ENCODE measurements at regions of chr2 and their contacts with region 1.

Region 1: GRCh38 chr2:98835831-98836385 is 100.1 kb downstream of the CRACDL start:
- DNase-seq: no peak
- H3K4me3 ChIP-seq: no peak overlapping the region
- H3K27ac ChIP-seq: no peak overlapping the region
- H3K4me1 ChIP-seq: peaks cover 23% of the 10 kb centered on the region
- H3K27me3 ChIP-seq: no peaks in the 10 kb centered on the region
- CTCF ChIP-seq: no peak
- POLR2A ChIP-seq: no peak

Region 2: GRCh38 chr2:98568881-98569793 is 266.8 kb before region 1 on chr2:
- CTCF ChIA-PET with region 1: interaction called, 17 read pairs
- POLR2A ChIA-PET with region 1: no interaction called
- dilution Hi-C with region 1: no loop called
- intact Hi-C with region 1: loop called (anchors 1 kb)
- DNase-seq: peak; percentile 30
- H3K4me3 ChIP-seq: no peak overlapping the region
- H3K27ac ChIP-seq: no peak overlapping the region
- H3K4me1 ChIP-seq: no peaks in the 10 kb centered on the region
- H3K27me3 ChIP-seq: no peaks in the 10 kb centered on the region
- CTCF ChIP-seq: peak; percentile 95
- POLR2A ChIP-seq: no peak

Region 3: GRCh38 chr2:98702127-98702802 is 133.6 kb before region 1 on chr2:
- CTCF ChIA-PET with region 1: interaction called, 3 read pairs
- POLR2A ChIA-PET with region 1: no interaction called
- dilution Hi-C with region 1: no loop called
- intact Hi-C with region 1: loop called (anchors 2 kb)
- DNase-seq: peak; percentile 43
- H3K4me3 ChIP-seq: no peak overlapping the region
- H3K27ac ChIP-seq: peak overlapping the region; percentile 50
- H3K4me1 ChIP-seq: peaks cover 36% of the 10 kb centered on the region
- H3K27me3 ChIP-seq: no peaks in the 10 kb centered on the region
- CTCF ChIP-seq: no peak
- POLR2A ChIP-seq: no peak

Region 4: DNA sequence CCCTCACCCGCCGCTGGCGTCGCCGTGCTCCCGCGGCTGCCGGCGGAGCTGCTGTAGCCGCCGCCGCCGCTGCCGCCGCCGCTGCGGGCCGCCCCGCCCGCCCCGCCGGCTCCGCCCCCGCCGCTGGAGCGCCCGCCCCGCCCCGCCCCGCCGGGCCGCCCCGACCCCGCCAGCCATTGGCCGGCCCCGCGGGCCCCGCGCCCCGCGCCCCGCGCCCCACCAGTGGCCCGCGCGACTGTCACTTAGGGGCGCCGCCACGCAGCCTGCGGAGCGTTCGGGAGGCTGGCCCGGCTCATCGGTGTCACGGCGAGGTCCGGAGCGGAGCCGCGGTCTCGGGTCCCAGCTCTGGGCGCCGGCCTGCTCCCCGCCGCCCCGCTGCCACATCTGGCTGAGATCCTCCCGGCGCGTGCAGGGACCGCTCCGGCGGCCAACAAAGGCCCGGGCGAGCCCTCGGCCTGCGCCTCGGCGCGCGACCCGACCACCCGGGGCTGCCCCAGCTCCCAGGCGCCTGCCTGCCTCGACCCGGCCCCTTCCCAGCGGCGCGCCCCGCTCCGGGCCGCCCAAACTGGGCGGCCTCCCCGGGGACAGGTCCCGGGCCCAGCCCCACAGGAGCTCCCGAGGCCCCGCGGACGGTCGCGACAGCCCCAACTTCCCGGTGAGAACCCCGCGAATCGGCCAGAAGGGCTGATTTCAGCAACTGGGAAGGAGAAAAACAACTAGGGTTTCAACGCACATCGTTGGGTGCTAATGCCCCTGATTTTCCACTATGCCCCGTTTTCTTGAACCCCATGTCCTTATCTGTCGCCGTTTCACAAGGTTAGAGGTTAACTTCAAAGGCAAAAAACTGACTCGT is 104.6 kb before region 1 on chr2 and contains the start of gene MGAT4A:
- CTCF ChIA-PET with region 1: interaction called, 21 read pairs
- POLR2A ChIA-PET with region 1: no interaction called
- dilution Hi-C with region 1: no loop called
- intact Hi-C with region 1: loop called (anchors 1 kb)
- DNase-seq: peak; percentile 52
- H3K4me3 ChIP-seq: peak within 1 kb of the TSS; percentile 64 to 97 (median 77)
- H3K27ac ChIP-seq: peak within 1 kb of the TSS; percentile 60
- H3K4me1 ChIP-seq: peaks cover 48% of the 10 kb centered on the region
- H3K27me3 ChIP-seq: no peaks in the 10 kb centered on the region
- CTCF ChIP-seq: no peak
- POLR2A ChIP-seq: peak; percentile 68
- total RNA-seq, gene MGAT4A: 42.2 and 47.6 TPM in 2 replicates

Region 5: DNA sequence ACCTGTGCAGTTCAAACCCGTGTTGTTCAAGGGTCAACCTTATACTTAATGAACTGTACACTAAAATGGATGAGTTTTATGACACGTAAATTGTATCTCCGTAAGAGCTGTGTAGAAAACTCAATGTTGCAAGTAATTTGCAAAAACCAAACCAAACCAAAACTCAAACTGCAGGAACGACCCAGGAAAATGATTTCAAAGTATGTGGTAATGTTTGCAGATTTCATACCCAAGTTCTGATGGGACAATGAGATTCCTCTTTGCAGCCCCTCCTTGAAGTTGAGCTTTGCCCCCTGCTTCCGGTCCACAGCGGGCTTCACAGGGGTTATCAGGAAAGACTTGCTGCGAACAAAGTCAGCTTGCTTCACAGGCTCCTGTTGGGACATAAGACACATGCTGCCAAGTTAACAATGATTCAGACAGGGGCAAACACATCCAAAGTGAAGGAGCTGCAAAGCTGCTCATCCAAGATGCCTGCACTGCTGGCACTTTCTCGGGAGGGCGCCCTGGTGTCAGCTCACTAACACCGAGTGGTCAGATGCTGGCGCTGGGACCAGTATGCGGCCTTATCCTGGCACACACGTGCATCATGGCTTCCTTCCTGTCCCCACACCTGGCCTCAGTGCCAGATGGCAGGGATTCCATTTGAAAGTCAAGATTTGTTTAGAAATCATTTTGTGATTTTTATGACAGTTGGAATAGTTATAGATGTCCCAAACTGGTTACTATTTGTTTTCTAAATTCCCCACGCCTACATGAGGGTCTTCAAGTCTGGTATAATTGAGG is 39.8 kb before region 1 on chr2:
- CTCF ChIA-PET with region 1: interaction called, 3 read pairs
- POLR2A ChIA-PET with region 1: no interaction called
- dilution Hi-C with region 1: no loop called
- intact Hi-C with region 1: loop called (anchors 1 kb)
- DNase-seq: peak; percentile 49
- H3K4me3 ChIP-seq: no peak overlapping the region
- H3K27ac ChIP-seq: no peak overlapping the region
- H3K4me1 ChIP-seq: peaks cover 43% of the 10 kb centered on the region
- H3K27me3 ChIP-seq: no peaks in the 10 kb centered on the region
- CTCF ChIP-seq: peak in 1 of 2 donors; percentile 6
- POLR2A ChIP-seq: no peak

Region 6: DNA sequence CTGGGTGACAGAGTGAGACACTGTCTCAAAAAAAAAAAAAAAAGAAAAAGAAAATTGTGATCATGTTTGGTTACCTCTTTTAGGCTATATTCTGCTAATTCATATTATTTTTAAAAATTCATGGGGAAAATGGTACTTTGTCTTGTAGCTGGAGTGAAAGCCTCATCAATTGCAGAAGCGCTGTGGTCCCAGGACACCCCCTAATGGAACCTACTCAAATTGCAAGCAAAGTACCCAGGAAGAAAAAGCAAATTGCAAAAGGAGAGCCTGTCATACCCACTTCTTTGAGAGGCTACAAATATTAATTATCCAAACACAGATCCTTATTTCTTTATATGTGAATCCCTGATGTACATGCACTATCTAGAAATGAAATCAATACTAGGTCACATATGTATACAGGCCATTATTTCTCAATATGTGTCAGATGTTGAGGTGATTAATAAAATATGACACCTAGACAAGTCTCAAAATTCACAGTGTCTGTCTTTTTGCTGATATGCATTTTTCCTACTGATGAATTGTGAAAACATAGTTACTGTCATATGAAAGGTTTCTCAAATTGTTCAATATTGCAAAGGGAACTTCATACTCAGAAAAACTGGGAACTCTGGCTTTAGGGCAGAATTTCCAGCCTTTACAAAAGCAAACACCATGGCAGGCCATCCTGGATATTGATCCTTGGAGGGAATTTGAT is 87.5 kb after region 1 on chr2:
- CTCF ChIA-PET with region 1: no interaction called
- POLR2A ChIA-PET with region 1: no interaction called
- dilution Hi-C with region 1: no loop called
- intact Hi-C with region 1: loop called (anchors 5 kb)
- DNase-seq: no peak
- H3K4me3 ChIP-seq: no peak overlapping the region
- H3K27ac ChIP-seq: no peak overlapping the region
- H3K4me1 ChIP-seq: no peaks in the 10 kb centered on the region
- H3K27me3 ChIP-seq: no peaks in the 10 kb centered on the region
- CTCF ChIP-seq: no peak
- POLR2A ChIP-seq: no peak

Region 7: GRCh38 chr2:99066075-99066958 is 230.4 kb after region 1 on chr2:
- CTCF ChIA-PET with region 1: interaction called, 24 read pairs
- POLR2A ChIA-PET with region 1: no interaction called
- dilution Hi-C with region 1: no loop called
- intact Hi-C with region 1: loop called (anchors 1 kb)
- DNase-seq: peak; percentile 68
- H3K4me3 ChIP-seq: peak overlapping the region in 1 of 3 experiments; percentile 26
- H3K27ac ChIP-seq: no peak overlapping the region
- H3K4me1 ChIP-seq: peaks cover 20% of the 10 kb centered on the region
- H3K27me3 ChIP-seq: no peaks in the 10 kb centered on the region
- CTCF ChIP-seq: peak; percentile 39 to 61
- POLR2A ChIP-seq: no peak